Thyroid gland (tissue), 4 donors: ENCODE measurements at regions of chr1 and their contacts with region 1.

Region 1: DNA sequence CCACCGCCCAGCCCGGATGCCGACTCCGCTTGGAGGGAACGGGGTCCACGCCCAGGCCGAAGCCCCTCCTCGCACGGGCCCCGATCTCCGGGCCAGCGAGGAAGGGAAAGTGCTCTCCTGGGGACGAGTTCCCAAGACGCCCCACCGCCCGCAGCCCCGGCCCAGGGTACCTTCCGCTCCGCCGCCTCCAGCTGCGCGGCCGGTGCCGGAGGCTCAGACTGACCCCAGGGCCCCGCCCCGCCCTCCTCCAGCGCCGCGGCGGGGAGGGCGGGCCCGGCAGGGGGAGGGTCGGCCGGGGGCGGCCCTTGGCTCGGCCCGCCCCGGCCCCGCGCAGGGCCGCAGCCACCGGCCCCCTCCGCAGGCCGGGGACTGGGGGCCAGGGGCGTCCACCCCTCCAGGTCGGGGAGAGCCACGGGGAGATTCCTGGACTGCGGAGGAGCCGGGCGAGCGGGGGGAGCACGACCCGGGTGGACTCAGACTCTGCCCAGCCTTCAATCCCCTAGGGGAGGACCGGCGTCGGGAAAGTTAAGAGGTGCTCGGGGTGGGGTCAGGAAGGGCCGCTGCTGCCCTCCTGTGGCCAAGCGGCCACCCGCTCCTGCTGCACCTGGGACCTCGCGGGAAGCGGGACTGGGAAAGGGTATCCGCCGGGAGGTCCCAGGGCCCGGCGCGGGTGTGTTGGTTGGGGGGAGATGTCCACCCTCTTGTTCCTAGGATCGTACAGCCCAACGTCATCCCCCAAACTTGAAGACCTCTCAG is at the start of gene RHOC:
- DNase-seq: peak; percentile 90
- H3K4me3 ChIP-seq: peak within 1 kb of the TSS; percentile 87 to 100 (median 99)
- H3K27ac ChIP-seq: peak within 1 kb of the TSS; percentile 92 to 97 (median 95)
- H3K4me1 ChIP-seq: peaks cover 15 to 29% of the 10 kb centered on the region in 2 donors
- H3K27me3 ChIP-seq: no peaks in the 10 kb centered on the region
- CTCF ChIP-seq: peak; percentile 78 to 95 (median 90)
- POLR2A ChIP-seq: peak; percentile 38 to 78
- total RNA-seq, gene RHOC: 125 to 188 (median 175) TPM

Region 2: GRCh38 chr1:112390775-112391602 is 316.1 kb before region 1 on chr1:
- intact Hi-C with region 1: loop called (anchors 5 kb)
- DNase-seq: peak; percentile 86 to 88
- H3K4me3 ChIP-seq: peak overlapping the region in 1 of 3 donors; percentile 16
- H3K27ac ChIP-seq: peak overlapping the region; percentile 56 to 76 (median 71)
- H3K4me1 ChIP-seq: peaks cover 11 to 24% of the 10 kb centered on the region in 2 donors
- H3K27me3 ChIP-seq: no peaks in the 10 kb centered on the region
- CTCF ChIP-seq: peak; percentile 87 to 98 (median 94)
- POLR2A ChIP-seq: no peak

Region 3: DNA sequence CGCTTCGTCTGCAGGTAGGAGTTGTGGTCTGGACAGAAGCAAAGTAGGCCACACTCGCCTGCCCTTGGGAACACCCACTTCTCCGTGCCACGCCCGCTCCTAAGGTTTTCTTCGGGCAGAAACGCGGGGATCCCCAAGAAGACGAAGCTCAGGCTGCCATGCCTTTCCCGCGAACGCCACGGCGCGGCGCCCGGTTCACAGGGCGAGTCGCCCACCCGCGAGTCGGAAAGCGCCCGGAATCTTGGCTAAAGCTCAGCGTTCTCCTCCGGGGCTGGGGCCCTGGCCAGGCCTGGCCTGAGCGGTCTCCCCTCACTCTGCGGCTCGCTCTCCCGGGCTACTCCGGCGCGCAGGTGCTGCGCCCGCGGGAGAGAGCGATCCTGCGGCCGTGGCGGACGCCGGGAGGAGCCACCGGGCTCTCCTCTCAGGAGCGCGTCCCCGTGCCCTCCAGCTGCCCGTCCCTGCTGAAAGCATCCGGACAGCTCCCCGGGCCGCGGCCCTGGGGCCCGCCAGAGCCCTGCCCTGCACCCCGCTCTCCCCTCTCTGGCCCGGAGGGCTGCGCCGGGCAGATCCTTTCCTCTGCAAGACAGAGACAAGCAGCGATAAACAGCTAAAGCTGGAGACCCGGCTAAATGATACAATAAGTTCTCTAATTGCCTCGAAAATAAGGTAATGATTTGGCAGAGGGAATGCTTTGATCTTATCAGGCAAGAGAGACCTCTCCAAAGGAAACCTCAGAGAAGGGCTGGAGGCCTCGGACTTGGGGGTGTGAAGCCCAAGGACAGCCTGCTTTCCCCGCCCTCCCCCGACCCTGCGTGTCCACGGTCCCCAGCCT is 205.1 kb before region 1 on chr1:
- intact Hi-C with region 1: loop called (anchors 10 kb)
- DNase-seq: peak; percentile 73 to 78
- H3K4me3 ChIP-seq: peak overlapping the region in 2 of 3 donors; percentile 25 to 33
- H3K27ac ChIP-seq: no peak overlapping the region
- H3K4me1 ChIP-seq: peaks cover 0 to 12% of the 10 kb centered on the region in 2 donors
- H3K27me3 ChIP-seq: no peaks in the 10 kb centered on the region
- CTCF ChIP-seq: peak in 5 of 6 experiments; percentile 29 to 72 (median 57)
- POLR2A ChIP-seq: no peak

Region 4: DNA sequence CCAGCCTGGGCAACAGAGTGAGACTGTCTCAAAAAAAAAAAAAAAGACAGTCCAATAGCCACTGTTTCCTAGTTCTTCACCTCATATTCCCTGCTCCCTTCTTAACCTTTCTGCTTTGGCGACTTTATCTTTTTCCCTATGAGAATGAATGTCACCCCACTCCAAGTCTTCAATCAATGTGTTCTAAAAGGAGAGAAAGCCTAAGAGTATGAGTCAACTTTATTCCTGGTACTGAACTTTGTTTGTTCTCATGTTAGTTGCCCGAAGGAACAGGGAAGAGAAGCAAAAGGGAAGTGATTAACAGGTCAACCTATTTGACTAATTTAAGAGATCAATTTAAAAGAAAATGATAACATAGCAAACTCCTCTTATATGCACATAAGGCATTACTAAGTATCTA is 288.8 kb after region 1 on chr1:
- intact Hi-C with region 1: no loop called
- DNase-seq: no peak
- H3K4me3 ChIP-seq: no peak overlapping the region
- H3K27ac ChIP-seq: no peak overlapping the region
- H3K4me1 ChIP-seq: peaks cover 7 to 11% of the 10 kb centered on the region in 2 donors
- H3K27me3 ChIP-seq: no peaks in the 10 kb centered on the region
- CTCF ChIP-seq: no peak
- POLR2A ChIP-seq: no peak